ENCODE measurements at regions of chr12 and their contacts with region 1.

Region 1: GRCh38 chr12:71663561-71664294 is at the start of gene ZFC3H1:
- DNase-seq: peak; percentile 99
- H3K4me3 Mint-ChIP-seq: peak within 1 kb of the TSS; percentile 100
- H3K27ac Mint-ChIP-seq: peak within 1 kb of the TSS; percentile 100
- H3K4me1 Mint-ChIP-seq: peaks cover 32% of the 10 kb centered on the region
- H3K27me3 Mint-ChIP-seq: no peaks in the 10 kb centered on the region
- CTCF ChIP-seq: peak; percentile 9
- total RNA-seq, gene ZFC3H1: 55.3 and 55.8 TPM in 2 replicates

Region 2: GRCh38 chr12:71645268-71645667 is 18.5 kb before region 1 on chr12:
- CTCF ChIA-PET with region 1: interaction called, 3 read pairs
- POLR2A ChIA-PET with region 1: interaction called, 17 read pairs
- intact Hi-C with region 1: no loop called
- DNase-seq: no peak
- H3K4me3 Mint-ChIP-seq: no peak overlapping the region
- H3K27ac Mint-ChIP-seq: no peak overlapping the region
- H3K4me1 Mint-ChIP-seq: no peaks in the 10 kb centered on the region
- H3K27me3 Mint-ChIP-seq: no peaks in the 10 kb centered on the region
- CTCF ChIP-seq: no peak

Region 3: GRCh38 chr12:71694099-71694820 is 30.5 kb after region 1 on chr12:
- CTCF ChIA-PET with region 1: no interaction called
- POLR2A ChIA-PET with region 1: interaction called, 248 read pairs
- intact Hi-C with region 1: no loop called
- DNase-seq: no peak
- H3K4me3 Mint-ChIP-seq: no peak overlapping the region
- H3K27ac Mint-ChIP-seq: peak overlapping the region; percentile 79
- H3K4me1 Mint-ChIP-seq: peaks cover 24% of the 10 kb centered on the region
- H3K27me3 Mint-ChIP-seq: no peaks in the 10 kb centered on the region
- CTCF ChIP-seq: no peak

Region 4: DNA sequence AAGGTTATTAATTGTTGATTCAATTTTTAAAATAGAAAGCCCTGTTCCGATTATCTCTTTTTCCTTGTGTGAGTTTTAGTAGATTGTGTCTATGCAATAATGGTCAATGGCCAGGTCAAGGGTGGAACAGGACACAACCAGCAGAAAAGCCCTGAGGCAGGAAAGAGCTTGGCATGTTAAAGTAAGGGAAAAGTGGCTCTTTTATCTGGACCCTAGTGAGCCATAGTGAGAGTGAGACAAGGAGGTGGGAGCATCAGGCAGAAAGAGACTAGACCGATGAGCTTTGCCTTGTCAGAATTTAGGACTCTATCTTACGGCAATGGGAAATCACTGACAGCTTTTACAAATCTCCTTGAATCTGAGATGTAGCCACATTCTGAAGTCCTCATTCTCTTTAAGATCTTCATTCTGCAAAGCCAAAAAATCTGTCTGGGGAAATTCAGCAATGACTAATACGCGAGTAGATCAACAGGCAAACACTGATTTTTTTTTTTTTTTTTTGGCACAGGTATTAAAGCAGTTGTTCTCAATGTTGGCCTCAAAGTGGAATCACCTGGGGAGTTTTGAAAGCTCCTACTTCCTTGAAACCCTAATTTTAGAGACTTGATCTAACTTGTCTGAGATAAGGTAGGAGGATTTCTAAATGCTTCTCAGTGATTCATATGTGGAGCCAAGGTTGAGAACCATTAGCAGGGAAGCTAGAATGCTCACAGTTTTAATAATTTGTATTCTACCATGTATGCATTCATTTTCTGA is 56.1 kb after region 1 on chr12:
- CTCF ChIA-PET with region 1: interaction called, 4 read pairs
- POLR2A ChIA-PET with region 1: interaction called, 83 read pairs
- intact Hi-C with region 1: no loop called
- DNase-seq: peak; percentile 92
- H3K4me3 Mint-ChIP-seq: no peak overlapping the region
- H3K27ac Mint-ChIP-seq: peak overlapping the region; percentile 30
- H3K4me1 Mint-ChIP-seq: peaks cover 7% of the 10 kb centered on the region
- H3K27me3 Mint-ChIP-seq: no peaks in the 10 kb centered on the region
- CTCF ChIP-seq: no peak

Region 5: DNA sequence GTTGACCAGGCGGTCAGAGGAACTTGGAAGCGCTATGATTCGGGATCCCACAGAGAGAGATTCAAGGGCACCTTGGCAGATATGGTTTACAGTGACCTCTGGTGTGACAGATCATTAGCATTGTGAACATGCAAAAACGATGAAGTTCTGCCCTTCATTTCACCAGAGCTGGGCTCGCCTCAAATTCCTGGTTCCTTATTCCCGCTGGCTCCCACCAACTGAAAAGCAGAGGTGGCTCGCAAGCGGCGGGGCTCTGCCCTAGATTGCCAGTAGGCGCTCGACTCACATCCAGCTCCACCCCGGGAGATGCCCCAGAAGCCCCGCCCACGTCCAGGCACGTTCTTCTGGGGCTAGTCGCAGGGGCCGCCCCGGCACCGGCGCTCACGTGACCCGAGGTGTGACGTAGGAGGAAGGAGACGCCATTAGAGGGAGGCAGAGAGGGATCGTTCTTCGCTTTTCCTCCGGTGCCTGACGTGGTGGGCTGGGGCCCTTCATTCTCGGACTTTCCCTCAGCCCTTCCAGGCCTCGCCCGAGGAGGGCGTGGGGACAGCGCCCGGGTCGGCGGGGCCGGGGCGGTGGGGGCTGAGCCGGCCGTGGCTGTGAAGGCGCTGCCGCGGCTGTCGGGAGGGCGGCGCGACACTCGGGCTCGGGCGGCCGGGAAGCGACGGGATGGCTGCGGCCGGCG is 90.9 kb after region 1 on chr12 and contains the start of gene RAB21:
- CTCF ChIA-PET with region 1: interaction called, 76 read pairs
- POLR2A ChIA-PET with region 1: interaction called, 258 read pairs
- intact Hi-C with region 1: loop called (anchors 2 kb)
- DNase-seq: peak; percentile 98
- H3K4me3 Mint-ChIP-seq: peak within 1 kb of the TSS; percentile 86
- H3K27ac Mint-ChIP-seq: peak within 1 kb of the TSS; percentile 89
- H3K4me1 Mint-ChIP-seq: no peaks in the 10 kb centered on the region
- H3K27me3 Mint-ChIP-seq: peaks cover 23% of the 10 kb centered on the region
- CTCF ChIP-seq: no peak
- total RNA-seq, gene RAB21: 86.4 and 88.0 TPM in 2 replicates

Measured in MCF 10A (cell line).